Activated CD4-positive, alpha-beta memory T cell treated with anti-CD3 and anti-CD28 coated beads for 36 hours (primary cell): ENCODE measurements at regions of chr6 and their contacts with region 1.

Region 1: GRCh38 chr6:16183187-16183664 is 54.3 kb downstream of the MYLIP start:
- DNase-seq: no peak
- H3K4me3 Mint-ChIP-seq: no peak overlapping the region
- H3K27ac Mint-ChIP-seq: no peak overlapping the region
- H3K4me1 Mint-ChIP-seq: peaks cover 20% of the 10 kb centered on the region
- H3K27me3 Mint-ChIP-seq: no peaks in the 10 kb centered on the region

Region 2: DNA sequence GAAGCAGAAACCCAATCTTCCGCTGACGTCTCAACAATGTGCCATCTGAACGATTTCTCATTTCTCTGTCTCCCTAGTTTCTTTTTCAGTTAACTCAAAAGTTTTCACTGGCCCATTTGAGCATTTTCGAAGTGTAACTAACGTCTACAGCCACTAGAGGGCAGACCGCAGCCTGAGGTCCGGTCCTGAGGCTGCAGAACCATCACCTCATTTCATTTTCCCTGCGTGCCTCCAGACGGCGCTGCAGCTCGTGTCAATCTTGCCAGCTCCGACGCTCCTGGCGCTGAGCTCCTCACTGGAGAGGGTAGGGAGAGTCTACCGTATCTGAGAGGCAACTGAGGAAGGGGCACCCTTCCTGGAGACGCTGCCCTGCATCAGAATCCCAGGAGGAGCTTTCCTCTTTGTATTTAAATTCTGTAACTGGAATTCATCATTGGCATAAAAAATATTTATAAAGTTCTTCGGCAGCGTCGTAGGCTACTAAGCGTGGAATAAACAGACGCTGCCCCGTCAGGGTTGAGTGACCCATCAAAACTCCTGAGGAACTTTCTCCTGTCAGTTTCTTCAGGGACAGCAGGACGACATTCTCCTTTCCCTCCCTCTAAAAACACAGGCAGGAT is 491.9 kb before region 1 on chr6:
- CTCF ChIA-PET with region 1: interaction called, 108 read pairs
- POLR2A ChIA-PET with region 1: no interaction called
- intact Hi-C with region 1: loop called (anchors 1 kb)
- DNase-seq: peak; percentile 87
- H3K4me3 Mint-ChIP-seq: peak overlapping the region; percentile 43
- H3K27ac Mint-ChIP-seq: peak overlapping the region; percentile 43
- H3K4me1 Mint-ChIP-seq: peaks cover 8% of the 10 kb centered on the region
- H3K27me3 Mint-ChIP-seq: peaks cover 7% of the 10 kb centered on the region

Region 3: GRCh38 chr6:15901141-15902115 is 281.8 kb before region 1 on chr6:
- CTCF ChIA-PET with region 1: interaction called, 29 read pairs
- POLR2A ChIA-PET with region 1: no interaction called
- intact Hi-C with region 1: loop called (anchors 2 kb)
- DNase-seq: peak; percentile 57
- H3K4me3 Mint-ChIP-seq: no peak overlapping the region
- H3K27ac Mint-ChIP-seq: peak overlapping the region; percentile 60
- H3K4me1 Mint-ChIP-seq: peaks cover 25% of the 10 kb centered on the region
- H3K27me3 Mint-ChIP-seq: peaks cover 9% of the 10 kb centered on the region

Region 4: DNA sequence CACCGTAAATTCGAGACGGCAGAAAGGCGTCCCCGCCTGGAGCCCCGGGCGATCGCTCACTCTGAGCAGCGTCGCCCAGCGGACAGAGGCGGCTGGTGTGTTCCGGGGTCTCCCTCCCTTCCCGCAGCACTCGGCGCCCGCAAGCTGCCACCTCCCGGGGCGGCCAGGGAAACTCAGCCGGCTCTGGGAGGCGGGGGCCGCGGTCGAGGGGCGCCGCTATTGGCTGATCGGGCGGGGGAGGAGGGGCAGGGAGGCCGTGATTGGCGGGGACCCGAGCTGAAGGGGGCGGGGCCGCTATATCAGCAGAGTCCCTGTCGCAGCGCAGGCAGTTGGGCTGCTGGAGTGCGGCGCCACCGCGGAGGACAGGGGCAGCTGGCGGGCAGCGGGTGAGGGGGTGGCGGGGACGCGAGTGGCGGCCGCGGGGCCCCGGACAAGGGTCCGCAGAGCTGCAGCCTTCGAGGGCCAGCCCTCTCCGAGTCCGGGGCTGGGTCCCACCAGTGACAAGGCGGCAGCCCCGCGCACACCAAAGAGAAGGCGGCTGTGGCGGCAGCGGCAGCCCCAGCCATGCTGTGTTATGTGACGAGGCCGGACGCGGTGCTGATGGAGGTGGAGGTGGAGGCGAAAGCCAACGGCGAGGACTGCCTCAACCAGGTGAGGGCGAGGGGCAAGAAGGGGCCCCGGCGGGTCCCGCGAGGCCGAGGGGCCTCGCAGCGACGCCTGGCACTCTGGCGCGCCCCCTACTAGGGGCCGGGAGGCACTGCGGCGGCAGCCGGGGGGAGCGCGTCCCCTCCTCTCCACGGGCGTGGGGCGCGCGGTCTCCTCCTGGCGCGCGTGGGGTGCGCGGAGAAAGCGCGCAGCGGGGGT is 54.2 kb before region 1 on chr6 and contains the start of gene MYLIP:
- CTCF ChIA-PET with region 1: interaction called, 20 read pairs
- POLR2A ChIA-PET with region 1: interaction called, 11 read pairs
- intact Hi-C with region 1: loop called (anchors 2 kb)
- DNase-seq: peak; percentile 98
- H3K4me3 Mint-ChIP-seq: peak within 1 kb of the TSS; percentile 93
- H3K27ac Mint-ChIP-seq: peak within 1 kb of the TSS; percentile 94
- H3K4me1 Mint-ChIP-seq: peaks cover 28% of the 10 kb centered on the region
- H3K27me3 Mint-ChIP-seq: no peaks in the 10 kb centered on the region
- total RNA-seq, gene MYLIP: 11.4 TPM

Region 5: DNA sequence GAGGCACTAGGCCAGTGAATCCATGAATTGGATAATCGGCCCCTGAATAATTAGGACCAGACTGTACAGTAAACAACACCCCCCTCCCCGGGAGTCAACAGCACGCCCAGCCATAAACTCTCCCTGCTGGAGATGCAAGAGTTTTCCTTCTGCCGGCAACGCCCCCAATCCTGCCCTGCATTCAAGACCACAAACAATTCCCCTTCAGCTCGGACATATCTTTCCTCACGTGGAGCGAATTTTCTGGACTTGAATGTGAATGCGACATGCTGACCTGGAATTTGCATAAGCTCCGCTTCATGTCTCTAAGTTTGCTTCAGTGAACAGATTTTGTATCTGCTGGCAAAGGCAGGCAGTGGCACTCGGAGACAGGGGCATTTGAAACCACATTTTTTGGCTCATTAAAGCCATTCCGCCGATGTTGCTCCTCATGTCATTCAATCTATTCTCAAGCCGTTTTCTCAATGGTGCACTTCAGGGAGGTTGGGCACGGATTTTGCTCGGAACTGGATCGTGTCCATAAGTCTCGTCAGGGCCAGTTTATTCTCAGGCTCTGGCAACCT is 17.2 kb after region 1 on chr6:
- CTCF ChIA-PET with region 1: interaction called, 40 read pairs
- POLR2A ChIA-PET with region 1: interaction called, 3 read pairs
- intact Hi-C with region 1: no loop called
- DNase-seq: no peak
- H3K4me3 Mint-ChIP-seq: no peak overlapping the region
- H3K27ac Mint-ChIP-seq: no peak overlapping the region
- H3K4me1 Mint-ChIP-seq: no peaks in the 10 kb centered on the region
- H3K27me3 Mint-ChIP-seq: peaks cover 9% of the 10 kb centered on the region